ENCODE measurements at regions of chr1 and their contacts with region 1.

Region 1: GRCh38 chr1:153577624-153578051 is 12.0 kb upstream of the S100A2 start:
- DNase-seq: peak in 20 of 42 donors; percentile 11 to 68 (median 45)

Region 2: GRCh38 chr1:153386500-153386901 is 191.1 kb before region 1 on chr1:
- intact Hi-C with region 1: no loop called
- DNase-seq: peak in 29 of 42 donors; percentile 13 to 68 (median 36)

Region 3: GRCh38 chr1:153553830-153554541 is 23.7 kb before region 1 on chr1:
- intact Hi-C with region 1: no loop called
- DNase-seq: peak in 1 of 42 donors; percentile 52

Region 4: DNA sequence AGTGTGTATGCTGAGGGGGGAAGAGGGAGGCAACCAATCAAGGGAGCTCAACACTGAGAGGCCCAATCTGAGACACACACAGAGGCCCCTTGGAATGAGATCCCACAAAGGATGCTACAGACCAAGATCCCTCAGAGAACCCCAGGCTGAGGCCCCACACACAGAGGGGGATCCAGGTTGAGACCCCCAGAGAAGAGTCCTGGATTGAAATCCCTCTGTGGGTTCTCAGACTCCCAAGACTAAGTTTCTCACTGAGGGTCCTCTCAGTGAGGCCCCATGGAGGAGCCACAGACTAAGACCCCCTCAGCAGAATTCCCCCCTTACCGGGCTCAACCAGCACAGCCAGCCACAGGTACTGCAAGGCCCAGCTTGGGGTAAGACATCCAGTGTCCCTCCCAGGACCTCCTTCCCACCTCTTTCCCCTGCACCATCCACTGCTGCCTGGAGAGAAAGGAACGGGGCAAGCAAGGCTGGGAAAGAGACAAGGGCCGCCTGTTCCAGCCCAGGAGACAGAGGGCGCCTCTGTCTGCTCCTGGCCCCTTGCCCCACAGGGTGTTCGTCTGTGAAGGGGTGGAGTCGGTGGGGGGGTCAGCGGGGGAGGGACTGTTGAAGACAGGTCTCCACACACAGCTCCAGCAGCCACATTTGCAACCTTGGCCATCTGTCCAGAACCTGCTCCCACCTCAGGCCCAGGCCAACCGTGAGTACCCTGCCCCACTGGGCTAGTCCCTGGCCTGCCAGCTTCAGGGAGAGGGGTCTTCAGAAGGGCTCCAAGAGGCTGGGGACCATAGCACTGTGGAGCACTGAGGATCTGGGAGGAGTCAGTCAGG is 50.4 kb after region 1 on chr1 and contains the start of gene S100A1:
- intact Hi-C with region 1: loop called (anchors 2 kb)
- DNase-seq: peak; percentile 50 to 92 (median 76)

Measured in head of caudate nucleus (tissue), 42 donors.